ENCODE measurements at regions of chr19 and their contacts with region 1.

Region 1: DNA sequence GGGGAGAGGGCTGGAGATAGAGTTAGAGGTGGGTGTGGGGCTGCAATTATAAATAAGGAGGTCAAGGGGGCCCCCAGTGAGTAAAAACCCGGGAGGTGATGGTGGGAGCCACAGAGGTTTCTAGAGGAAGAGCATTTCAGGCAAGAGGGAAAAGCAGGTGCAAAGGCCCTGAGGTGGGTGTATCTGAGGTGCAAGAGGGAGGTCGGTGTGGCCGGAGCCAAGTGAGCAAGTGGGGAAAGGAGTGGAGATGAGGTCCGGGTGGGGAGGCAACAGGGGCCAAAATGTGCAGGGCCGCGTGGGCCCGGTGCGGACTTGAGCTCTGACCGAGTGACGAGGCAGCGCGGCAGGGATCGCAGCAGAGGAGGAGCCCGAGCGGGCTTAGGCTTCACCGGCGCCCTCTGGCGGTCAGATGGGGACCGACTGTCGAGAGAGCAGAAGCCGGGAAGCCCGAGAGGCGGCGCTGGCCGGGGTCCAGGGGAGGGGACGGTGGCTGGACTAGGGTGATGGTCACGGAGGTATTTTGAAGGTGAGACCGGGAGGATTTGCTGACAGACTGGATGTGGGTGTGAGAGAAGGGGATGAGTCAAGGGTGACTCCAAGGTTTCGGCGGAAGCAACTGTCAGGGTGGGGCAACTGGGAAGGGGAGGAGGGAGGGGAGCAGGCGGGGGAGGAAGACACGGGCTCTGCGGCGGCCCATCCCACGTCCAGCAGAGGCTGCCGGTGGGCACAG is 17.7 kb upstream of the SPACA4 start:
- DNase-seq: peak; percentile 96
- H3K4me3 ChIP-seq: peak overlapping the region; percentile 46 to 63 (median 52)
- H3K27ac ChIP-seq: peak overlapping the region in 3 of 4 donors; percentile 30 to 53 (median 42)
- H3K4me1 ChIP-seq: peaks cover 3 to 18% (median 16%) of the 10 kb centered on the region in 4 donors
- H3K27me3 ChIP-seq: no peaks in the 10 kb centered on the region
- CTCF ChIP-seq: peak in 2 of 3 experiments; percentile 91
- EP300 ChIP-seq: no peak
- POLR2A ChIP-seq: no peak

Region 2: DNA sequence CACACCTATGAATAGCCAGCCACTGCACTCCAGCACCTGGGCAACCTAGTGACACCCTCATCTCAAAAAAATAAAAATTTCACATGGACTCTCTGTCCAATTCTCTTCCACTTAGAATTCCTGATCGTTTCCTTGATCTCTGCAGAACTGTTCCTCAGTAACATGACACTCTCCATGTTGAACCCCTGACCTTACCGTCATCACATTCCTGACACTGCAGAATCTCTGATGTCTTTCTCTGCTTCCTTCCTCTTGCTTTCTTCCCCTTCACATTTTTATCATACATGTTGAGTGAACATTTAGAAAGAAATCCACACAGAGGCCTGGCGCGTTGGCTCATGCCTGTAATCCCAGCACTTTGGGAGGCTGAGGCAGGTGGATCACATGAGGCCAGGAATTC is 303.9 kb before region 1 on chr19:
- intact Hi-C with region 1: no loop called
- DNase-seq: no peak
- H3K4me3 ChIP-seq: no peak overlapping the region
- H3K27ac ChIP-seq: no peak overlapping the region
- H3K4me1 ChIP-seq: no peaks in the 10 kb centered on the region
- H3K27me3 ChIP-seq: peaks cover 0 to 17% (median 0%) of the 10 kb centered on the region in 4 donors
- CTCF ChIP-seq: no peak
- EP300 ChIP-seq: no peak
- POLR2A ChIP-seq: no peak

Region 3: GRCh38 chr19:48489608-48490216 is 99.1 kb before region 1 on chr19:
- intact Hi-C with region 1: loop called (anchors 1 kb)
- DNase-seq: no peak
- H3K4me3 ChIP-seq: no peak overlapping the region
- H3K27ac ChIP-seq: no peak overlapping the region
- H3K4me1 ChIP-seq: peaks cover 31 to 56% (median 54%) of the 10 kb centered on the region in 4 donors
- H3K27me3 ChIP-seq: peaks cover 0 to 17% (median 4%) of the 10 kb centered on the region in 4 donors
- CTCF ChIP-seq: peak; percentile 95 to 99 (median 95)
- EP300 ChIP-seq: no peak
- POLR2A ChIP-seq: no peak